ENCODE measurements at regions of chr1 and their contacts with region 1.

Region 1: DNA sequence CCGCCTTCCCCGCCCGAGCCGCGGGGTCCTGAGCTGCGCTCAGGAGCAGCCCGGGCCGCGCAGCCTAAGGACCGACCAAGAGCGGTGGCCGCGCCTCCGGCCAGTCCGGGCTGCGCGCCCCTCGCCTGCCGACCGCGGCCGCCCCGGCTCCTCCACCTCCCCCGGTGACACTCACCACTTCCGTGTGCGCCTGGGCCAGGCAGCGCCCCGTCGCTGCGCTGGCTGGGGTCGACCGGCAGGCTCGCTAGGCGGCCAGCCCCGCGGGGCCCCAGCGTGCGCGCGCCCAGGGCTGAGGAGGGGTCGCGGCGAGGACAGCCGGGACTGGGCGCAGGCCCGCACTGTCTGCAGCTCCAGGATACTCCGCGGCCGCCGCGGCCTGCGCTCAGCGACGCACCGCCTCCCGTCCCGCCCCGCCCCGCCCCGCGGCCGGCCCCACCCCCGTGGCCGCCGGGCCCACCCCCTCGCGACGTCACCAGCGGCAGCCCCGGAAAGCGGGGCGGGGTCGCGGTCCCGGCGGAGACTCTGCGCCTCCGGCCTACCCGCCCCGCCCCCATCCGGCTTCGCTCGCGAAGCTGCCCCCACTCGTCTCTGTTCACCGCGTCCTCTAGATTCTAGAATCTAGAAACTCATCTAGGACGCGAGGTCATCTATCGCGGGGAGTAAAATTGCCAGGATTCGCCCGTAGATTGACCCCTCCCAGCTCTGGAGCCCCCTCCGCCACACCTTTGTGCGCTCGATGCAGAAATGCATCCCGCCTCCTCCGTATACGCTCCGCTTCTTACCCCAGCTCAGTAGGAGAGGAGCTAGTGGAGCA is at the start of gene JAK1:
- DNase-seq: peak; percentile 94
- H3K4me3 ChIP-seq: peak within 1 kb of the TSS; percentile 51 to 97 (median 82)
- H3K27ac ChIP-seq: peak within 1 kb of the TSS; percentile 89 to 100 (median 94)
- H3K4me1 ChIP-seq: peaks cover 0 to 34% (median 24%) of the 10 kb centered on the region in 4 donors
- H3K27me3 ChIP-seq: no peaks in the 10 kb centered on the region
- CTCF ChIP-seq: no peak
- EP300 ChIP-seq: no peak
- POLR2A ChIP-seq: no peak
- total RNA-seq, gene JAK1: 99.6 to 143 (median 119) TPM

Region 2: DNA sequence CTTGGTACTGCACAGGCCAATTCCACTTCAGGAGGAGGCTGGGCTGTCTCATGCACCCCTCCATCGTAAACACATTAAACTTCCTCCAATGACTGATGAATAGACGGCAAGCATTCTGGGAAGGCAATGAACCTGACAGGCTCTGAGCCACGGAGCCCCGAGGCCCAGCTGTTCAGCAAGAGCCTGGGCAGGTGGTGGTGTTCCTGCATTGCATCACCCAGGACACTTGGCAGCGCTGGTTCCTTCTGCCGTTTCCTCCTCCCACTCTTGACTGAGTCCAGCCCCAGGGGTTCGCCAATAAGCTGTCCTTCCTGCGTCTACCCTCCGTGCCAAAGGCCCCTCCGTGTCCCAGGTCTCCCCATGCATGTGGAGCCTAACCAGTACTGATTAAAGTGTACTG is 109.8 kb before region 1 on chr1:
- intact Hi-C with region 1: loop called (anchors 5 kb)
- DNase-seq: peak; percentile 93
- H3K4me3 ChIP-seq: no peak overlapping the region
- H3K27ac ChIP-seq: peak overlapping the region in 3 of 4 donors; percentile 5 to 71 (median 64)
- H3K4me1 ChIP-seq: peaks cover 0 to 11% (median 8%) of the 10 kb centered on the region in 4 donors
- H3K27me3 ChIP-seq: no peaks in the 10 kb centered on the region
- CTCF ChIP-seq: no peak
- EP300 ChIP-seq: peak in 2 of 4 donors; percentile 62
- POLR2A ChIP-seq: no peak

Region 3: GRCh38 chr1:64898107-64898845 is 68.1 kb before region 1 on chr1:
- intact Hi-C with region 1: loop called (anchors 2 kb)
- DNase-seq: peak; percentile 95
- H3K4me3 ChIP-seq: no peak overlapping the region
- H3K27ac ChIP-seq: peak overlapping the region; percentile 59 to 83 (median 81)
- H3K4me1 ChIP-seq: peaks cover 0 to 36% (median 28%) of the 10 kb centered on the region in 4 donors
- H3K27me3 ChIP-seq: no peaks in the 10 kb centered on the region
- CTCF ChIP-seq: no peak
- EP300 ChIP-seq: peak in 2 of 4 donors; percentile 40 to 66
- POLR2A ChIP-seq: no peak

Region 4: GRCh38 chr1:65002508-65003315 is 36.3 kb after region 1 on chr1:
- intact Hi-C with region 1: loop called (anchors 2 kb)
- DNase-seq: peak; percentile 98
- H3K4me3 ChIP-seq: peak overlapping the region; percentile 50 to 69 (median 61)
- H3K27ac ChIP-seq: peak overlapping the region; percentile 93 to 97 (median 94)
- H3K4me1 ChIP-seq: peaks cover 0 to 13% (median 9%) of the 10 kb centered on the region in 4 donors
- H3K27me3 ChIP-seq: no peaks in the 10 kb centered on the region
- CTCF ChIP-seq: no peak
- EP300 ChIP-seq: peak; percentile 27 to 77 (median 72)
- POLR2A ChIP-seq: no peak

Region 5: DNA sequence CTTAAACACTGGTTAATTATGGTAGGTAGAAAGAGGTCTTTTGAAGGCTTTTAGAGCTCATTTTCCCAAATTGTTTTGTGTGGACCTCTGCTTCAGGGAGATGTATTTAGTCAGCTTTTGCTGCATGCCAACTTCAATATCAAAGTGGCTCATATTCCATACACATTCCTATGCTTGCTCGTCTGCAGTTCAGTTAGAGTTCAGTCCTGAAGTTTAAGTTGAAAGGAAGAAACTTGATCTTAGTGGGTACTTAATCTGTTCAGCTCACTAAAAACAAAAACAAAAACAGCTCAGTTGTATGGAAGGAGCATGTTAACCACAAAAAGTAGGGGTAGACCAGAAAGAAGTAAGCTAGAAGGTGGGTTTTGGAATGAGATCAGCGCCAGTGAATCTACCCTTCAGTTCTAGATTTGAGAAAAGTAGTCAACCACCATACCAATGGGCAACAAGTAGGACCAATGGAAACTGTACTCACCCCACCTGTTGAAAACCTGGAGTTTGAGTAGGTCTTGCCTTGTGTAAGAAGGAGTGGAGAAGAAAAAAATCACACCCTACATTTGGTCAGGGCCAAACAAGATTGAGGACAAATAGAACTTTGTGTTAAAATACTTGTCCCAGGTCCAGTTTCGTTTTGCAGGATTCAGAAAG is 512.1 kb after region 1 on chr1:
- intact Hi-C with region 1: no loop called
- DNase-seq: no peak
- H3K4me3 ChIP-seq: no peak overlapping the region
- H3K27ac ChIP-seq: no peak overlapping the region
- H3K4me1 ChIP-seq: no peaks in the 10 kb centered on the region
- H3K27me3 ChIP-seq: no peaks in the 10 kb centered on the region
- CTCF ChIP-seq: no peak
- EP300 ChIP-seq: no peak
- POLR2A ChIP-seq: no peak

Measured in sigmoid colon (tissue), 7 donors.